ENCODE measurements at regions of chr7 and their contacts with region 1.

Region 1: DNA sequence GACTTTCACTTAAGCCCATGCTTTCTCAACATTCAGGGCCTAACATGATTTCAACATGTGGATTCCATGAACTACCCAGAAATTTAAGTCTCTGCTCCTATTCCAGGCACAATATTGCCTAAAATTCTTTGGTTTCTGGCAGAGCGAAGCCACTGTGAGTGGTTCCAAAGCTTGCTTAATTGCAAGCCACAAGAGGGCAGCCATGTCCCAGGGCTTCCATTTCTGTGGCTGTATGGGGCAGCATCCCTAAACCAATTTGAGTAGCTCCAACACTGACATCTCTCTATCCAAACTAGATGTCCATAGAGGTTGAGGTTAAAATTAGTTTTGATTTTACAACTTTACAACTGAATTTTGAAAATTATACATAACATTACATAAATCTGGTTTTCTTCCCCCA is 56.3 kb upstream of the MDFIC start:
- DNase-seq: peak; percentile 71
- H3K4me3 ChIP-seq: no peak overlapping the region
- H3K27ac ChIP-seq: no peak overlapping the region
- H3K4me1 ChIP-seq: 0 out of 2 replicates have a peak, but pooled peaks cover 7% of the 10 kb centered on the region
- H3K27me3 ChIP-seq: no peaks in the 10 kb centered on the region

Region 2: GRCh38 chr7:115417662-115418061 is 552.1 kb after region 1 on chr7:
- in situ Hi-C with region 1: no loop called
- DNase-seq: no peak
- H3K4me3 ChIP-seq: no peak overlapping the region
- H3K27ac ChIP-seq: no peak overlapping the region
- H3K4me1 ChIP-seq: no peaks in the 10 kb centered on the region
- H3K27me3 ChIP-seq: no peaks in the 10 kb centered on the region

Region 3: DNA sequence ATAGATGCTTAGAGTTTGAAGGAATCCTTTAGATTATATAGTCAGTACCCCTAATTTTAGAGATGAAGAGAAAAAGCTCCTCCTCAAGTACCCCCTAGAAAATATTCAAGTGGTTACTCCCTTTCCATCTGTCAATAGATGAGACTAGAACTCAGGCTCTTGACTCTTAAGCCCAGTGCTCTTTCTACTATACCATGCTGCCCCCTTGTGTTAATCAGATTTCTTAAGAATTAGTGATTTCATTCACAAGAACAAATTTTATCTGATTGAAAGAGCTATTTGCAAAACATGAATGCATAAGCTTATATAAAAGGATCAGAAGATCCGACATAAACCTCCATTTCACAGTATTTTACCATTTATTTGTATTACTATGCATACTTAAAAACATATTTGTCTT is 985.7 kb after region 1 on chr7:
- in situ Hi-C with region 1: loop called (anchors 10 kb)
- DNase-seq: peak; percentile 71
- H3K4me3 ChIP-seq: no peak overlapping the region
- H3K27ac ChIP-seq: no peak overlapping the region
- H3K4me1 ChIP-seq: peaks cover 7% of the 10 kb centered on the region; the same call in 1 of the 2 replicates
- H3K27me3 ChIP-seq: no peaks in the 10 kb centered on the region

Measured in GM23248 (cell line).